Aorta (tissue), 5 donors: ENCODE measurements at regions of chr1 and their contacts with region 1.

Region 1: DNA sequence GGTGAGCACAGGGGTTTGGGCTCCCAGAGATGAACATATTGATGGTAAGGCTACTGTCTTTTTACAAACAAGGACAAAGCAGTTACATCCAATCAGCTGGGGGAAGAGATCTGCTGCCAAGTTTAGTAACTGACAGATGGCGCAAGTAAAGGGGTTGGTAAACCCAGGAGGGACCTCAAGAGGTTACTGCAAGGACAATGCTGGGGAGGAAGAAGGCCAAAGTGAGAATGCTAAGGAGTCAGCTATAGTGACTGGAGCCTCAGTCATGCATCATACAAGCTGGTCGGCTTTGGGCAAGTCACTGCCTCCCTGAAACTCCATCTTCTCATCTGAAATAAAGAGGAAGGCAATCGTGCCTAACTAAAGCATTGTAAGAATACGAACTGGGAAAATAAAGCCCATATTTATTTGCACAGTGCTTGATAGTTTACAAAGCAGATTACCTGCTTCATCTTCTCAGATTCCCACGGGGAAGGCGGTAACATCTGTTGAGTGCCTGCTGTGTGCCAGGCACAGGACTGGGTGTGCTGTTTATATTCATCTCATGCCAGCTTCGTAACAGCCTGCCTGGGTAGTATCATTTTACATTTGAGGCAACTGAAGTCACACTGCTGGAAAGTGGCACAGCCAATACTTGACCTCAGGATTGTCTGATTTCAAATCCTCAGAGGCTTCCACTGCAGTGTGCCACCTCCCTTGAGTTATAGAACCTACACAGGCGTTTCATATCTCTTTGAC is 114.8 kb downstream of the BEND5 start:
- DNase-seq: no peak
- ATAC-seq: no peak
- H3K4me3 ChIP-seq: no peak overlapping the region
- H3K27ac ChIP-seq: no peak overlapping the region
- H3K4me1 ChIP-seq: no peaks in the 10 kb centered on the region
- H3K27me3 ChIP-seq: no peaks in the 10 kb centered on the region

Region 2: GRCh38 chr1:48704736-48705135 is 42.8 kb after region 1 on chr1:
- intact Hi-C with region 1: loop called in 1 of 2 experiments (anchors 5 kb)
- DNase-seq: no peak
- ATAC-seq: no peak
- H3K4me3 ChIP-seq: no peak overlapping the region
- H3K27ac ChIP-seq: no peak overlapping the region
- H3K4me1 ChIP-seq: no peaks in the 10 kb centered on the region
- H3K27me3 ChIP-seq: no peaks in the 10 kb centered on the region